Kidney (tissue), 22 donors: ENCODE measurements at regions of chr17 and their contacts with region 1.

Region 1: DNA sequence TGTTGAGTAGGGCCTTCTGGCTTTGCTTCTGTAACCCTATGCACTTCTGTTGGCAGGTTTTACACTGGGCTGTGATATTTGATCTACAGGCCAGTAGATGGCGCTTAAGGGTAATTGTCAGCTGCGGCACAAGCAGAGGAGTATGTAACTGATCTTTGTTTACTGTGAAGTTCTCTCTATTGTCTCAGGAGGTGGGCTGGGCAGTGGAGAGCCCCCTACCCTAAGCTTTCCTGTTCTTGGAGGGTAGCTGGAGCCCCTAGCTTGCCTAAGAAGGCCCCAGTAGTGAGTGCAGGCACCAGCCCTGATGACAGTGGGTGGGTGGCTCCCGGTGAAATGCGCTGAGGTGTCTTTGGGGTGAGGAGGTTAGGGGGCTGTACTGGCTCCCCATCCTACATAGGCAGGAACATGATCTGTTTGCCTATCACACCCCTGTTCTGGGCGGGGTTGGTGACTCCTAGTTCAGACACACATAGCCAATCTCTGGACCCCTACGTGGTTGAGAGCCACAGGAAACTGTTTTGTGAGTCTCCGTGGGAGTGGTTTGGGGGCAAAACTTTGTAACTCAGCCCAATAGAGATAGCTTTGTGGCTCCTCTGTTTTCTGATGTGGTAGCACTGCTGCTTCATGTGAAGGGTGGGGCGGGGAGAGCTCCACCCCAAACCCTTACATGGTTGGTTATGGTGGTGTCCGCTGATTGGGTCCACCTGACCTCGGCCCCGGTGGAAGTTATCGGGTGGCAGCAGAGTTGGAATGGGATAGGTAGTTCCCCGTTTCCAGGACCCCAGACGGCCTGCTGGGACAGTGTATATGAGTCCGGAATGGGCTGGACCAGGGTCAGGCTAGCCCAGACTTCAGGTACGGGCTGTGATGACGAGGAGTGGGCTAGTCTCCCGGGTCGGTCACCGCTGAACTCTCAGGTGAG is 60.4 kb downstream of the SLFN11 start:
- DNase-seq: peak; percentile 68 to 86 (median 74)
- H3K4me3 ChIP-seq: peak overlapping the region in 2 of 3 donors; percentile 22 to 42
- H3K27ac ChIP-seq: no peak overlapping the region
- H3K4me1 ChIP-seq: peaks cover 0 to 12% (median 0%) of the 10 kb centered on the region in 3 donors
- H3K27me3 ChIP-seq: no peaks in the 10 kb centered on the region
- CTCF ChIP-seq: peak; percentile 72

Region 2: DNA sequence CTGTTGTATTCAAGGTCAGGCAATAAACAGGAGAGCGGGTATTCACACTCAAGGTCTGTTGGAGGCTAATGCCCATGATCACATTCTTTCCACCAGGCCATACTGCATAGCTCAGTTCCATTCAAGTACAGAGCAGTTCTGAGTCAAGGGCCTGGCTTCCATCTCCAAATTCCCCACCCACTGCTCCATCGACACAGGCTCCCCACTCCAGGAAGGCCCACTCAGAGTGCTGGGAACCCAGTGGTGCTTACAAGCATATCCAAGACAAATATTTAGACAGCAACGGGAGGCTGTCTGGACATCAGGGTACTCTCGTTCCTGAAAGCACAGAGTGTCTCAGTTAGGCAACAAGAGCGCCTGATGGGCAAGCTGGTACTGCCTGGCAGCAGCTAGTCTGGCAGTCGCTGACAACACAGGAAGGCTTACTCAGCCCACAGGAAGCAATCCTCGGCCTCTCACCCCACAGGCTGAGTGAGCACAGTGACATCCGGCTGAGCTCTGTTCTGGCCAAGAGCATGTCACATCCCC is 290.5 kb before region 1 on chr17:
- intact Hi-C with region 1: no loop called
- DNase-seq: peak in 4 of 5 donors; percentile 12 to 89 (median 33)
- H3K4me3 ChIP-seq: no peak overlapping the region
- H3K27ac ChIP-seq: peak overlapping the region; percentile 28 to 86
- H3K4me1 ChIP-seq: peaks cover 0 to 9% (median 4%) of the 10 kb centered on the region in 3 donors
- H3K27me3 ChIP-seq: no peaks in the 10 kb centered on the region
- CTCF ChIP-seq: no peak

Region 3: GRCh38 chr17:35051183-35051578 is 261.9 kb before region 1 on chr17:
- intact Hi-C with region 1: no loop called
- DNase-seq: no peak
- H3K4me3 ChIP-seq: peak overlapping the region in 2 of 3 donors; percentile 13 to 28
- H3K27ac ChIP-seq: peak overlapping the region; percentile 11 to 48
- H3K4me1 ChIP-seq: peaks cover 0 to 24% (median 8%) of the 10 kb centered on the region in 3 donors
- H3K27me3 ChIP-seq: no peaks in the 10 kb centered on the region
- CTCF ChIP-seq: no peak

Region 4: DNA sequence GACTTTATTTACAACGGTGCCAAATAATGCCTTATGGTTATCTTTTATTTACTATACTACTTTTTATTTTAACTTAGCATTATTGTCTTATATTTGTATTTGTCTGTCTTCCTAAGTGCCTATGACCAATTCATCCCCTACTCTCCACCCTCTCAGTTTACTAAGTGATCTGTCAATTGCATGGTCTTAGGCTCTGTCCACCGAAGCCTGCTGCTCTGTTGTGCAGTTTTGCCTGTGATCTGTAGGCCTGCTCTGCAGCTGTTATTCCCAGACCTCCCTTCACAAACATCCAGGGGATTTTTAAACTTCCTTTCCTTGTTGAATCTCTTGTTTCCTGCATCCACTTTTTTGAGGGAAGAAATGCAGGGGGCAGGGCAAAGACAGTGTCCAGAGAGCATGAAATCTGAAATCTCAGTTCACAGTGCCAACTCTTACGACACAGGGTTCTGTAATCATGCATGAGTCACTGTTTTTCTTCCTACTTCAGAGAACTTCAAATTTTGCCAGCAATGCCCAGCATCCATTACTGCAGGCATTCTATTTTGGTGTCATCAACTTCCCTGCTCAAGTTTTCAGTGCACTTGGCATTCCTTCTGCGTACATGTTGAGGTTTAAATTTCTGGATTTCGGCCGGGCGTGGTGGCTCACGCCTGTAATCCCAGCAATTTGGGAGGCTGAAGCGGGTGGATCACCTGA is 58.8 kb before region 1 on chr17:
- intact Hi-C with region 1: no loop called
- DNase-seq: peak in 1 of 5 donors; percentile 42
- H3K4me3 ChIP-seq: no peak overlapping the region
- H3K27ac ChIP-seq: no peak overlapping the region
- H3K4me1 ChIP-seq: peaks cover 0 to 9% (median 0%) of the 10 kb centered on the region in 3 donors
- H3K27me3 ChIP-seq: no peaks in the 10 kb centered on the region
- CTCF ChIP-seq: no peak

Region 5: DNA sequence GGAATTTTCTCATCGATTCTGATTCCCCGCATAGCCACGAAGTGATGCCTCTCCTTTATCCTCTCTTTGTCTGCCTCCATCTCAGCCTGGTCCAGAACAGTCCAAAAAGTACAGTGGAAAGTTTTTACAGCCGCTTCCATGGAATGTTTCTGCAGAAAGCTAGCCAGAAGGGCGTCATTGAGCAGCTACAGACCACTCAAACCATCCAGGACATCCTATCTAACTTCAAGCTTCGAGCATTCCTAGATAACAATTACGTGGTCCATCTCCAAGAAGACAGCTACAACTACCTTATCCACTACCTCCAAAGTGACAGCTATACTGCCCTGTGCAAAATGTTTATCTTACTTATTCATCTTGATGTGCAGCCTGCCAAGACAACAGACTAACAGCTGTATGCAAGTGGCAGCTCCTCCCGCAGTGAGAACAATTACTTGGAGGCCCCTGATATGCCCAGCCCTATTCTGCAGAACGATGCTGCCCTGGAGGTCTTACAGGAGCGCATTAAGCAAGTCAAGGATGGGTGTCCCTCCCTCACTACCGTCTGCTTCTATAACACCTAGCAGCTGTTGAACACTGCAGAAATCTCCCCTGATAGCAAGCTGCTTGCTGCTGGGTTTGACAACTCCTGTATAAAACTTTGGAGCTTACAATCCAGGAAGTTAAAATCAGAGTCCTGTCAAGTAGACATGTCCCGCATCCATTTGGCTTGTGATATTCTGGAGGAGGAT is 185.6 kb after region 1 on chr17:
- intact Hi-C with region 1: no loop called
- DNase-seq: no peak
- H3K4me3 ChIP-seq: no peak overlapping the region
- H3K27ac ChIP-seq: no peak overlapping the region
- H3K4me1 ChIP-seq: peaks cover 0 to 3% (median 0%) of the 10 kb centered on the region in 3 donors
- H3K27me3 ChIP-seq: peaks cover 59% of the 10 kb centered on the region
- CTCF ChIP-seq: no peak

Region 6: GRCh38 chr17:35537601-35538141 is 224.6 kb after region 1 on chr17 and contains the start of gene SLFN12L:
- intact Hi-C with region 1: loop called (anchors 5 kb)
- DNase-seq: no peak
- H3K4me3 ChIP-seq: no peak within 1 kb of the TSS
- H3K27ac ChIP-seq: peak within 1 kb of the TSS in 1 of 2 donors; percentile 28
- H3K4me1 ChIP-seq: no peaks in the 10 kb centered on the region
- H3K27me3 ChIP-seq: no peaks in the 10 kb centered on the region
- CTCF ChIP-seq: no peak
- total RNA-seq, gene SLFN12L: 6.2 TPM